Activated CD4-positive, alpha-beta memory T cell treated with anti-CD3 and anti-CD28 coated beads for 36 hours (primary cell): ENCODE measurements at regions of chr7 and their contacts with region 1.

Region 1: DNA sequence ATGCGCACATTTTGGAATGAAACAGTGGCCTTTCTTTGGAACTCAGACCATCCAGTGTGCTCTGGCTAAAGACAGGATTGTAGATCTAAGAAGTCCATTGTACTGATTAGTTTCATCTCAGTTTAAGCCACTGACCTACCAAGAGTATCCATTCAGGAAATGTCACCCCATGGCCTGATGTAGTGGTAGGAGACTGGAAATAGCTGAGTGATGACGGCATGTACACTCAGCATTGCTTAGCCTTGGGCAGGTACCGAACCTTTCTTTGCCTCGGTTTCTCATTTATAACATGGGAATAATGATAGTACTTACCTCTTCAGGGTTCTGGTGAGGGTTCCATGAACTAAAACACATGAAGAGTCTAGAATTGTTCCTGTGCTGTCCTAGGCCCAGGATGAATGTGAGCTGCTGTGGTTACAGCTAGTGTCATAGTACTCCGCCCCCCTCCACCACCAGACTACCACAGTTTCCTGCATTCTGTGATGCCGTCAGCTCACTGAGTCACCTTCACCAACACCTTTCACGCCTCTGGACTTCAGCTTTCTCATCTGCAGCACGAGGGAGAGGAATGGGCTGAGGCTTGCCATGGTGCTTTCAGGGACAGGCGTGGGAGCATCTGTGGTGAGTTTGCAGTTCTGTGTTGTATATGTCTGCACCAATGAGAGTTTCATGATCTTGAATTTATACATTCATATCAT is 484.0 kb upstream of the GALNT17 start:
- DNase-seq: peak; percentile 87
- H3K4me3 Mint-ChIP-seq: no peak overlapping the region
- H3K27ac Mint-ChIP-seq: peak overlapping the region; percentile 45
- H3K4me1 Mint-ChIP-seq: peaks cover 16% of the 10 kb centered on the region
- H3K27me3 Mint-ChIP-seq: peaks cover 4% of the 10 kb centered on the region

Region 2: GRCh38 chr7:70347880-70348279 is 300.1 kb before region 1 on chr7:
- CTCF ChIA-PET with region 1: no interaction called
- POLR2A ChIA-PET with region 1: no interaction called
- intact Hi-C with region 1: no loop called
- DNase-seq: no peak
- H3K4me3 Mint-ChIP-seq: no peak overlapping the region
- H3K27ac Mint-ChIP-seq: no peak overlapping the region
- H3K4me1 Mint-ChIP-seq: peaks cover 9% of the 10 kb centered on the region
- H3K27me3 Mint-ChIP-seq: no peaks in the 10 kb centered on the region

Region 3: GRCh38 chr7:70678621-70679251 is 30.8 kb after region 1 on chr7:
- CTCF ChIA-PET with region 1: interaction called, 3 read pairs
- POLR2A ChIA-PET with region 1: interaction called, 5 read pairs
- intact Hi-C with region 1: loop called (anchors 1 kb)
- DNase-seq: peak; percentile 22
- H3K4me3 Mint-ChIP-seq: no peak overlapping the region
- H3K27ac Mint-ChIP-seq: no peak overlapping the region
- H3K4me1 Mint-ChIP-seq: peaks cover 27% of the 10 kb centered on the region
- H3K27me3 Mint-ChIP-seq: peaks cover 8% of the 10 kb centered on the region

Region 4: GRCh38 chr7:70693686-70694360 is 45.9 kb after region 1 on chr7:
- CTCF ChIA-PET with region 1: interaction called, 6 read pairs
- POLR2A ChIA-PET with region 1: interaction called, 3 read pairs
- intact Hi-C with region 1: loop called (anchors 2 kb)
- DNase-seq: peak; percentile 44
- H3K4me3 Mint-ChIP-seq: peak overlapping the region; percentile 13
- H3K27ac Mint-ChIP-seq: no peak overlapping the region
- H3K4me1 Mint-ChIP-seq: peaks cover 7% of the 10 kb centered on the region
- H3K27me3 Mint-ChIP-seq: peaks cover 37% of the 10 kb centered on the region

Region 5: GRCh38 chr7:70775570-70776156 is 127.7 kb after region 1 on chr7:
- CTCF ChIA-PET with region 1: interaction called, 4 read pairs
- POLR2A ChIA-PET with region 1: no interaction called
- intact Hi-C with region 1: loop called (anchors 2 kb)
- DNase-seq: no peak
- H3K4me3 Mint-ChIP-seq: no peak overlapping the region
- H3K27ac Mint-ChIP-seq: peak overlapping the region; percentile 2
- H3K4me1 Mint-ChIP-seq: peaks cover 48% of the 10 kb centered on the region
- H3K27me3 Mint-ChIP-seq: no peaks in the 10 kb centered on the region